ENCODE measurements at regions of chr11 and their contacts with region 1.

Region 1: DNA sequence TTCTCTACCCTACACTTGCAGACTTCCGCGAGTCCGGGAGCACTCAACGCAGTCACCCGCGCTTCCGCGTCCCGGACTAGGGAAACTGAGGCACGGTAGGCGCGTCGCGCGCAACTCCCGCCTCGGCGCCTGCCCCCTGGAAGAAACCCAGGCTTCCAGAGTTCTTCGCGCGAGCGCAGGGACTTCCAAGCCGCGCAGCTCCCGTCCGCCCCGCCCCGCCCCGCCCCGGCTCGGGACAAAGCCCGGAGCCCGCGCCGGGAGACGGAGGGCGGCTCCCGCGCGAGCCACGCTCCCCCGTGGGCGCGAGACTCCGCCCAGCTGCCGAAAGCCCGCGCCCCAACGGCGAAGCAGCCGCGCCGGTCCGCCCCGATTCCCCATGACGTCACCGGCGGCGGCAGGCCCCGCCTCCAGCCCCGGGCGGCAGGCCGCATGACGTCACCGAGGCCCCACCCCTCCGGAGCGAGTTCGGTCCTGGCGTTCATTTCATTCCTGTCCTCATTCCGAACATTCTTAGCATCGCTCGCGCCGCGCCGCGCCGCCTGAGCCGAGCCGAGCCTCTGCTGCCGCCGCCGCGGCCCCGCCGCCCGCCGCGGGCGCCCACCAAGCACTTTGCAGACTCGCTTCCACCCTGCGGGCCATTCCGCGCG is at the start of gene TEAD1:
- DNase-seq: peak; percentile 96 to 98 (median 97)
- ATAC-seq: peak; percentile 89 to 97 (median 95)
- H3K4me3 ChIP-seq: peak within 1 kb of the TSS; percentile 64 to 92 (median 72)
- H3K27ac ChIP-seq: peak within 1 kb of the TSS; percentile 84 to 98 (median 96)
- H3K4me1 ChIP-seq: peaks cover 3 to 37% (median 24%) of the 10 kb centered on the region in 12 donors
- H3K27me3 ChIP-seq: peaks cover 0 to 44% (median 0%) of the 10 kb centered on the region in 9 donors
- CTCF ChIP-seq: no peak
- POLR2A ChIP-seq: peak in 1 of 2 donors; percentile 77
- total RNA-seq, gene TEAD1: 89.8 to 161 (median 116) TPM

Region 2: GRCh38 chr11:12331239-12331874 is 342.7 kb before region 1 on chr11:
- intact Hi-C with region 1: loop called in 3 of 10 experiments (anchors 5 to 10 kb)
- DNase-seq: peak; percentile 77 to 90 (median 79)
- ATAC-seq: peak; percentile 71 to 90 (median 82)
- H3K4me3 ChIP-seq: no peak overlapping the region
- H3K27ac ChIP-seq: peak overlapping the region in 1 of 12 donors; percentile 73
- H3K4me1 ChIP-seq: peaks cover 0 to 6% (median 0%) of the 10 kb centered on the region in 12 donors
- H3K27me3 ChIP-seq: no peaks in the 10 kb centered on the region
- CTCF ChIP-seq: peak; percentile 61 to 87 (median 79)
- POLR2A ChIP-seq: no peak

Region 3: GRCh38 chr11:12516387-12517105 is 157.5 kb before region 1 on chr11:
- intact Hi-C with region 1: loop called in 1 of 10 experiments (anchors 10 kb)
- DNase-seq: no peak
- ATAC-seq: peak in 1 of 4 donors; percentile 16
- H3K4me3 ChIP-seq: no peak overlapping the region
- H3K27ac ChIP-seq: peak overlapping the region in 1 of 12 donors; percentile 60
- H3K4me1 ChIP-seq: peaks cover 0 to 8% (median 0%) of the 10 kb centered on the region in 12 donors
- H3K27me3 ChIP-seq: no peaks in the 10 kb centered on the region
- CTCF ChIP-seq: no peak
- POLR2A ChIP-seq: no peak

Region 4: DNA sequence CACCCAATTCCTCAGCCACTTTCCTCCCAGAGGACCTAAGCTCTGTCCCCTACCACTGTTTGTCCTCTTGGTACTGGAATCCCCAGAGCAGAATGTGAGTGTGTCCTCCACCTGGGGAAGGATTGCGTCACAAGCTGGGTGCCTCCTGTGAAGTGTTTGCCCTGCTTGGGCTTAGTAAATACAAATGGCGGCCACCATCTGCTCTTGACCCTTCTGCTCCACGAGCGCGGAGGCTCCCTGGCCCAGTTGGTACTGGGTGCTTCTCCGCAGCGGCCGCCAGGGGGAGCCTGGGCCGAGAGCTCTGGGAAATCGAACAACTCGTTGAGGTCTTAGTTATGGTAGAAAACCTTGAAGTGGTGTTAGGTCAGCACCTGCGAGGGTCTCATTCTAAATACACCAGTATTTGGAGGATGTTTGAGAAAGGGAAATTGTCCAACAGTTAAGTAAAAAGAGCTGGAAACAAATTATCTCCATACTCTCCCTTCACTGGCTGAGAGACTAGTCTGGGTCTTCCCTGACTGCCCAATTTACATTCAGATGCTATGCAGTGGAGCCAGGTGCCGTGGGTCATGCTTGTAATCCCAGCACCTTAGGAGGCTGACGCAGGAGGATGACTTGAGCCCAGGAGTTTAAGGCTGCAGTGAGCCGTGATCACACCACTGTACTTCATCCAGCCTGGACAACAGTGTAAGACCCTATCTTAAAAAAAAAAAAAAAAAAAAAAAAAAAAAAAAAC is 74.5 kb before region 1 on chr11:
- intact Hi-C with region 1: loop called in 3 of 10 experiments (anchors 5 kb)
- DNase-seq: peak; percentile 22 to 76 (median 46)
- ATAC-seq: peak in 3 of 4 donors; percentile 33 to 76 (median 59)
- H3K4me3 ChIP-seq: no peak overlapping the region
- H3K27ac ChIP-seq: no peak overlapping the region
- H3K4me1 ChIP-seq: peaks cover 0 to 33% (median 15%) of the 10 kb centered on the region in 12 donors
- H3K27me3 ChIP-seq: no peaks in the 10 kb centered on the region
- CTCF ChIP-seq: peak; percentile 50 to 72 (median 62)
- POLR2A ChIP-seq: no peak

Region 5: DNA sequence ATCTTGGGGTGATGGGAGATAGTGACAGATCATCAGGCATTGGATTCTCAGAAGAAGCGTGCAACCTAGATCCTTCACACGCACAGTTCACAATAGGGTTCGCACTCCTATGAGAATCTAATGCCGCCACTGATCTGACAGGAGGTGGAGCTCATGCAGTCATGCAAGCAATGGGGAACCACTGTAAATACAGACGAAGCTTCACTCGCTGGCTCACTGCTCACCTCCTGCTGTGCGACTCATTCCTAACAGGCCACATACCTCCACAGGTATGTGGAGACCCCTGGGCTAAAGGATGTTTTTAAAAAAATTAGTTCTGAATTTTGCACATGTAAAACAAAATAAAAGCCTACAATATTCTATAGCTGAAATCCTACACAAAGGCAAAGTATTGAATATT is 20.3 kb before region 1 on chr11:
- intact Hi-C with region 1: no loop called
- DNase-seq: no peak
- ATAC-seq: no peak
- H3K4me3 ChIP-seq: no peak overlapping the region
- H3K27ac ChIP-seq: no peak overlapping the region
- H3K4me1 ChIP-seq: no peaks in the 10 kb centered on the region
- H3K27me3 ChIP-seq: no peaks in the 10 kb centered on the region
- CTCF ChIP-seq: no peak
- POLR2A ChIP-seq: no peak

Region 6: DNA sequence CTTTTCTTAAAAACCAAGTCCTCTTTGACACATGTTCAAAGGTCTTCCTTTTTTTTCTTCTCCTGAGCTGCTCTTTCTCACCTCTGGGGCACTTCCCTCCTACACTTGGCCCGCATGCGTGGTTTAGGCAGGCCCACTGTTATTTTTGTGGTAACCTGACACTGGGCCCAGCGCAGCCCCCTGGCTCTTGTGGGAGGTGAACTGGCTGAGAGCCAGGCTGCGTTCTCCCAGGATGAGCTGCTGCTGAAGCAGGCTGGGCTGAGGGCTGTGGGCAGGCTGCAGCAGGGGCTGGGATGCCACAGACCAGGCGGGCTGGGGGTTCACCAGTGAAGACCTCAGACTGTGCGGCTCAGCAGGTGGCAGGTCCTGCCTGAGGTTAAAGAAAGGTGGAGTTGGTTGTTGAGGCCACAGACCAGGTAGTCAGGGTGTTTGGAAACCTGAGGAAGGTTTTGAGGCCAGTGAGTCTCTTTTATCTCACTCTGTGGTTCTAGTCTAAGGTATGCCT is 72.6 kb after region 1 on chr11:
- intact Hi-C with region 1: loop called in 2 of 10 experiments (anchors 2 to 10 kb)
- DNase-seq: peak; percentile 74 to 87 (median 82)
- ATAC-seq: peak; percentile 68 to 83 (median 77)
- H3K4me3 ChIP-seq: no peak overlapping the region
- H3K27ac ChIP-seq: peak overlapping the region in 10 of 12 donors; percentile 9 to 81 (median 53)
- H3K4me1 ChIP-seq: peaks cover 0 to 71% (median 18%) of the 10 kb centered on the region in 12 donors
- H3K27me3 ChIP-seq: no peaks in the 10 kb centered on the region
- CTCF ChIP-seq: no peak
- POLR2A ChIP-seq: no peak

Region 7: GRCh38 chr11:12888525-12889158 is 214.6 kb after region 1 on chr11:
- intact Hi-C with region 1: loop called in 9 of 10 experiments (anchors 1 to 10 kb)
- DNase-seq: peak; percentile 83 to 88 (median 86)
- ATAC-seq: peak; percentile 72 to 91 (median 86)
- H3K4me3 ChIP-seq: no peak overlapping the region
- H3K27ac ChIP-seq: peak overlapping the region in 11 of 12 donors; percentile 37 to 84 (median 71)
- H3K4me1 ChIP-seq: peaks cover 0 to 52% (median 26%) of the 10 kb centered on the region in 12 donors
- H3K27me3 ChIP-seq: no peaks in the 10 kb centered on the region
- CTCF ChIP-seq: peak; percentile 54 to 88 (median 78)
- POLR2A ChIP-seq: no peak